BJ (cell line): ENCODE measurements at regions of chr11 and their contacts with region 1.

Region 1: DNA sequence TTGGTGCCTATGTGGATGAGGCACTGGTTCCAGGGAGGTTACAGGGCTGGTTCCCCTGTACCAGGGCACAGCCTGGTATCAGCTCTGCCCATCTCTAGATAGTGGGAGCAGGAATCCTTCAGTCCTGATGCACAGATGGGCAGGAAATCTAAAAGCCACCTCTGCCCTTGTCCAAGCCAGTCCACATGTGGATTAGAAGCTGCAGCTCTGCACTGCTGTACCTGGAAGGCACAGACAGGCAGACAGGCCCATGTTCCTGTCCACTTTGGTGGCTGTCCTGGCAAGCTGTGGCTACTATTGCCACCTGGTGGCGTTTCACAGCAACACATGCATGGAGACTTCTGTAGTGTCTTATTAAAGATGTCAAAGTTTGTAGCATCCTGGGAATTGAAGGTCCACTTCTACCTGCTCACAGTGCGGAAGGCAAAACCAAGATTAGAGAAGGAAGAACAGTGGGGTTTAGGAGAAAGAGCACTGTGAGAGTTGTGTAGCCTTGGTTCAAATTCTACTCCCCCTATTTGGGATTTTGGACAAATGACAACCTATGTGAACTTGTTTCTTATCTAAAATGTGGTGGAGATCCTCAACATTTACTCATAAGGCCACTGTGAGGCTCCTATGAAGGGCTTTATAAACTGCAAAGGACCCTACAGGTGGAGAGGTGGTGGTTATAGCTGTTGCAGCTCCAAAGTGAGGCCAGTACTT is 30.1 kb downstream of the NAV2 start:
- DNase-seq: no peak
- H3K4me3 ChIP-seq: no peak overlapping the region
- H3K27me3 ChIP-seq: no peaks in the 10 kb centered on the region
- CTCF ChIP-seq: peak; percentile 84

Region 2: GRCh38 chr11:19701421-19701820 is 41.3 kb before region 1 on chr11:
- CTCF ChIA-PET with region 1: no interaction called
- POLR2A ChIA-PET with region 1: no interaction called
- DNase-seq: no peak
- H3K4me3 ChIP-seq: no peak overlapping the region
- H3K27me3 ChIP-seq: no peaks in the 10 kb centered on the region
- CTCF ChIP-seq: no peak

Region 3: DNA sequence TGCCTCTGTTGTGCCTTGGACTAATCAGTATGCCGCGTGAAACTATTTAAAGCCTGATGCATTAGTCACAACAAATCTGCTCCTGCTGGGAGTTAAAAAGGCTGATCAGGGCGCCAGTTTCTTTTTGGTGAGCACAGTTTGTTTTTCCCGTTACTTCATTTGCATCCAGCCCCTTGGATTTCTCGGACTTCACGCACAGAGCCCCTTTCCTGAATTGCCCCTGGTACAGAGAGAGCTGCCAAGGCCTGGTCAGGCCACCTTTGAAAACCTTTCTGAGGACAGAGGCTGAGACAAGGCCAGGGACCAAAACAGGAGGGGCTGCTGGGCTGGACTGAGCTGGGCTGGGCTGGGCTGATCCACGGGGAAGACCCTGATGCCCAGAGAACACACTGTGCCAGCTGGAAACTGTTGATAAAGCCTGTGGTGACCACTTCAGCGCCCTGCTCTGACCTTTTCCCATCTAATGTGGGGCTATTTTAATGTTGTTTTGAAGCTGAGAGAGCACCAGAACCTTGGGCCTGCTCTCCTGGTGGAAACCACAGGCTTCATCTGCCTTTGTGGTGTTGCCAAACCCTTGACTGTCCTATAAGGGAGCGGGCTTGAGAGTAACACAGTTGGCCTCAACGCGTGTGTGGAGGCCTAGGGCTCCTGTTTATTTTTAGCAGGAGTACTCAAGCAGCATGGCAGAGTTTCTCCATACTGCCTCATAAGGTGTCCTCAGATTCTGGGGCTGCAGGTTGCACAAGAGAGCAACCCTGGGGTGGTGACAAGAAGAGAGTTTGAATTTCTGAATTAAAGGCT is 14.1 kb after region 1 on chr11:
- CTCF ChIA-PET with region 1: interaction called, 24 read pairs
- POLR2A ChIA-PET with region 1: no interaction called
- DNase-seq: no peak
- H3K4me3 ChIP-seq: no peak overlapping the region
- H3K27me3 ChIP-seq: no peaks in the 10 kb centered on the region
- CTCF ChIP-seq: no peak